ENCODE measurements at regions of chr6 and their contacts with region 1.

Region 1: GRCh38 chr6:116990679-116991078 is 113.6 kb downstream of the RFX6 start:
- DNase-seq: no peak
- H3K4me3 ChIP-seq: no peak overlapping the region
- H3K27ac ChIP-seq: no peak overlapping the region
- H3K4me1 ChIP-seq: peaks cover 0 to 7% (median 3%) of the 10 kb centered on the region in 4 donors
- H3K27me3 ChIP-seq: no peaks in the 10 kb centered on the region
- CTCF ChIP-seq: no peak
- EP300 ChIP-seq: no peak
- POLR2A ChIP-seq: no peak

Region 2: GRCh38 chr6:116536216-116536621 is 454.5 kb before region 1 on chr6:
- in situ Hi-C with region 1: no loop called
- intact Hi-C with region 1: no loop called
- DNase-seq: no peak
- H3K4me3 ChIP-seq: no peak overlapping the region
- H3K27ac ChIP-seq: no peak overlapping the region
- H3K4me1 ChIP-seq: no peaks in the 10 kb centered on the region
- H3K27me3 ChIP-seq: peaks cover 6% of the 10 kb centered on the region
- CTCF ChIP-seq: peak; percentile 52 to 77 (median 76)
- EP300 ChIP-seq: no peak
- POLR2A ChIP-seq: no peak

Region 3: GRCh38 chr6:117018771-117019170 is 28.1 kb after region 1 on chr6:
- in situ Hi-C with region 1: no loop called
- intact Hi-C with region 1: loop called (anchors 1 kb)
- DNase-seq: no peak
- H3K4me3 ChIP-seq: no peak overlapping the region
- H3K27ac ChIP-seq: no peak overlapping the region
- H3K4me1 ChIP-seq: no peaks in the 10 kb centered on the region
- H3K27me3 ChIP-seq: no peaks in the 10 kb centered on the region
- CTCF ChIP-seq: no peak
- EP300 ChIP-seq: no peak
- POLR2A ChIP-seq: no peak

Measured in transverse colon (tissue), 4 donors.